CD4-positive, alpha-beta T cell (primary cell): ENCODE measurements at regions of chr15 and their contacts with region 1.

Region 1: GRCh38 chr15:64387562-64388168 is at the start of gene TRIP4:
- DNase-seq: peak; percentile 94 to 98 (median 96)
- ATAC-seq: peak; percentile 99
- H3K4me3 ChIP-seq: peak within 1 kb of the TSS; percentile 76
- H3K4me3 Mint-ChIP-seq: peak within 1 kb of the TSS; percentile 98
- H3K27ac ChIP-seq: peak within 1 kb of the TSS in 1 of 2 donors; percentile 8
- H3K27ac Mint-ChIP-seq: peak within 1 kb of the TSS; percentile 81
- H3K4me1 ChIP-seq: peaks cover 26% of the 10 kb centered on the region
- H3K4me1 Mint-ChIP-seq: peaks cover 18% of the 10 kb centered on the region
- H3K27me3 ChIP-seq: no peaks in the 10 kb centered on the region
- H3K27me3 Mint-ChIP-seq: no peaks in the 10 kb centered on the region
- CTCF ChIP-seq: no peak
- total RNA-seq, gene TRIP4: 9.6 to 10.7 TPM

Region 2: GRCh38 chr15:64333986-64334929 is 53.4 kb before region 1 on chr15:
- CTCF ChIA-PET with region 1: no interaction called
- POLR2A ChIA-PET with region 1: interaction called, 10 read pairs
- intact Hi-C with region 1: no loop called
- DNase-seq: peak in 13 of 14 experiments; percentile 28 to 72 (median 45)
- ATAC-seq: peak; percentile 96
- H3K4me3 ChIP-seq: no peak overlapping the region
- H3K4me3 Mint-ChIP-seq: peak overlapping the region; percentile 30
- H3K27ac ChIP-seq: peak overlapping the region in 1 of 2 donors; percentile 49
- H3K27ac Mint-ChIP-seq: peak overlapping the region; percentile 16
- H3K4me1 ChIP-seq: peaks cover 5% of the 10 kb centered on the region
- H3K4me1 Mint-ChIP-seq: peaks cover 36% of the 10 kb centered on the region
- H3K27me3 ChIP-seq: no peaks in the 10 kb centered on the region
- H3K27me3 Mint-ChIP-seq: no peaks in the 10 kb centered on the region
- CTCF ChIP-seq: peak; percentile 33

Region 3: GRCh38 chr15:64355944-64356709 is 31.5 kb before region 1 on chr15 and contains the start of gene CSNK1G1:
- CTCF ChIA-PET with region 1: interaction called, 3 read pairs
- POLR2A ChIA-PET with region 1: interaction called, 20 read pairs
- intact Hi-C with region 1: loop called (anchors 1 kb)
- DNase-seq: peak; percentile 80 to 97 (median 89)
- ATAC-seq: peak; percentile 96
- H3K4me3 ChIP-seq: peak within 1 kb of the TSS; percentile 95
- H3K4me3 Mint-ChIP-seq: peak within 1 kb of the TSS; percentile 96
- H3K27ac ChIP-seq: peak within 1 kb of the TSS; percentile 49 to 55
- H3K27ac Mint-ChIP-seq: peak within 1 kb of the TSS; percentile 87
- H3K4me1 ChIP-seq: peaks cover 16% of the 10 kb centered on the region
- H3K4me1 Mint-ChIP-seq: peaks cover 22% of the 10 kb centered on the region
- H3K27me3 ChIP-seq: no peaks in the 10 kb centered on the region
- H3K27me3 Mint-ChIP-seq: no peaks in the 10 kb centered on the region
- CTCF ChIP-seq: peak; percentile 34
- total RNA-seq, gene CSNK1G1: 12.2 to 13.7 TPM

Region 4: DNA sequence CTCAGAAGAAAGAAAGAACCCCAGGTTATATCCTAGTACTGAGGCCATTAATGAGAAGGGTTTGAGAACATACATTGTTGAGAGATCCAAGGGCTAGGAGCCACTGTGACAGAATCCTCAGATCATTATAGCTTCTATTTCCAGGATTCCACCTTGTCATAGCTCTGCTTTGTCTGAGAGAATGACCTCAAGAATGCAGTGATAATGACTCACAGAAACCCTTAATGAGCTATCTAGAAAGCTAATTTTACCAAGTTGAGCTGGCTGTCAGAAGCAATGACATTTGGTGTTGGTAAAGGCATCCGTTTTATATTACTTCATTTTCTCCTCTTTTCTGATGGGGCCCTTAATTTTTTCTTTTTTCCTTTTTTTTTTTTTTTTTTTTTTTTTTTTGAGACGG is 10.9 kb after region 1 on chr15:
- CTCF ChIA-PET with region 1: no interaction called
- POLR2A ChIA-PET with region 1: interaction called, 11 read pairs
- intact Hi-C with region 1: no loop called
- DNase-seq: no peak
- ATAC-seq: no peak
- H3K4me3 ChIP-seq: no peak overlapping the region
- H3K4me3 Mint-ChIP-seq: no peak overlapping the region
- H3K27ac ChIP-seq: no peak overlapping the region
- H3K27ac Mint-ChIP-seq: no peak overlapping the region
- H3K4me1 ChIP-seq: no peaks in the 10 kb centered on the region
- H3K4me1 Mint-ChIP-seq: peaks cover 4% of the 10 kb centered on the region
- H3K27me3 ChIP-seq: no peaks in the 10 kb centered on the region
- H3K27me3 Mint-ChIP-seq: no peaks in the 10 kb centered on the region
- CTCF ChIP-seq: no peak

Region 5: DNA sequence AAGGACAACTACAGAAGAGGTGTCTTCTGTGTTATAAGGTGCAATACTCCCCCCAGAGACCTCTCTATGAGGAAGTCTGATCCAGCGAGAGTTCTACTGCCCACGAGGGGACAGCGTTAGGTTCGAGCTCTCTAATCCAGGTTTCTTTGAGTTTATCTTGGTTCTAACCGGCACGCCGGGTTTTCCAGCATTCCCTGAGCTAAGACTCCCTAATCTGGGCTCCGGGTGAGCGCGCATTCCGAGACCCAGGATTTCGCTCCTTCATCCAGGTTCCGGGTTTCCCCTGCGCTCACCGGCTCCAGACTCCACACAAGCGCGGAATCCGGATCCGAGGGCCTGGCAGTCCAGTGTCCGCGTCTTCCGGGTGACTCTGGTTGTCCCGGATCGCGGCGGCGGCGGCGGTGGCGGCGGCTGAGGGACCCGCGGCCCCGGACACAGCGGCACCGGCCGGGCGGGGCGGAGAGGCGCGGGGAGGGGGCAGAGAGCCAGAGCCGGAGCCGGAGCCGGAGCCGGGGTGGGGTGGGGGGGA is 72.6 kb after region 1 on chr15 and contains the start of gene ZNF609:
- CTCF ChIA-PET with region 1: no interaction called
- POLR2A ChIA-PET with region 1: interaction called, 5 read pairs
- intact Hi-C with region 1: loop called in 1 of 2 experiments (anchors 10 kb)
- DNase-seq: peak; percentile 74 to 91 (median 86)
- ATAC-seq: peak; percentile 80
- H3K4me3 ChIP-seq: peak within 1 kb of the TSS; percentile 71
- H3K4me3 Mint-ChIP-seq: peak within 1 kb of the TSS; percentile 92
- H3K27ac ChIP-seq: peak within 1 kb of the TSS; percentile 52
- H3K27ac Mint-ChIP-seq: peak within 1 kb of the TSS; percentile 87
- H3K4me1 ChIP-seq: peaks cover 46% of the 10 kb centered on the region
- H3K4me1 Mint-ChIP-seq: peaks cover 88% of the 10 kb centered on the region
- H3K27me3 ChIP-seq: no peaks in the 10 kb centered on the region
- H3K27me3 Mint-ChIP-seq: no peaks in the 10 kb centered on the region
- CTCF ChIP-seq: no peak
- total RNA-seq, gene ZNF609: 62.4 to 65.3 TPM

Region 6: DNA sequence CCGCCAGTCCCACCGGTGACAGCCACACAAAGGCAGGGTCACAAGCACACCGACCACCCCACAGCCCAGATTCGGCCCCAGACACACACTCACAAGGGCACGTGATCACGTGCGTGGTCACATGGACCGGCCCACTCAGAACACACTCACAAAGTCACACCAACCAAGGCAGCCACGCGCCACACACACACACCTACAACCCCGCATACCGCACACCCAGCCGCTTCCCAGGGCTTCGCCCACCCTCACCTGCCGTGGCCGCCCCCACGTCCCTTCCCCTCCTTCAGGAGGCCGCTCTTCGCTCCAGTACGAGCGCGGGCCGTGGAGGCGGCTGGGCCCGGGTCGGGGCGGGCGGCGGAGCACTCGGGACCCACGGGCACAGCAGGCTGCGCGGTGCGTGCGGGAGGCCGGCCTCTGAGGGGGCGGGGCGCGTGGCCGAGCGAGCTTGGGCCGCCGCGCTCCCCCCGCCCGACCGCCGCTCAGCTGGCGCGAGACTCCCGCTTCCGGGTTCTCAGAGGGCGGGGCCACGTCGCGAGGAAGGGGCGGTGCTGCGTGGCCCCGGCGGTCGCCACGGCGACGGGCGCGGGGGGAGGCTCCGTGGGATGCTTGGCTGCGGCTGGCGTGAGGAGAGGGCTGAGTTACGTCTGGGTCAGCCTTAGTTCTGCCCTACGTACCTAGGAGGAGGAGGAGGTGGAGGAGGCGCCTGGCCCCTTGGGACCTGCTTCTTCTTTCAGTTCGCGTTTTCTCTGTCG is 601.9 kb after region 1 on chr15 and contains the start of gene SPG21:
- CTCF ChIA-PET with region 1: no interaction called
- POLR2A ChIA-PET with region 1: interaction called, 4 read pairs
- intact Hi-C with region 1: loop called in 1 of 2 experiments (anchors 5 kb)
- DNase-seq: peak; percentile 71 to 96 (median 87)
- ATAC-seq: peak; percentile 88
- H3K4me3 ChIP-seq: peak within 1 kb of the TSS; percentile 97
- H3K4me3 Mint-ChIP-seq: peak within 1 kb of the TSS; percentile 91
- H3K27ac ChIP-seq: peak within 1 kb of the TSS; percentile 63 to 66
- H3K27ac Mint-ChIP-seq: peak within 1 kb of the TSS; percentile 87
- H3K4me1 ChIP-seq: peaks cover 29% of the 10 kb centered on the region
- H3K4me1 Mint-ChIP-seq: peaks cover 53% of the 10 kb centered on the region
- H3K27me3 ChIP-seq: no peaks in the 10 kb centered on the region
- H3K27me3 Mint-ChIP-seq: no peaks in the 10 kb centered on the region
- CTCF ChIP-seq: no peak
- total RNA-seq, gene SPG21: 29.4 to 32.7 TPM

Region 7: DNA sequence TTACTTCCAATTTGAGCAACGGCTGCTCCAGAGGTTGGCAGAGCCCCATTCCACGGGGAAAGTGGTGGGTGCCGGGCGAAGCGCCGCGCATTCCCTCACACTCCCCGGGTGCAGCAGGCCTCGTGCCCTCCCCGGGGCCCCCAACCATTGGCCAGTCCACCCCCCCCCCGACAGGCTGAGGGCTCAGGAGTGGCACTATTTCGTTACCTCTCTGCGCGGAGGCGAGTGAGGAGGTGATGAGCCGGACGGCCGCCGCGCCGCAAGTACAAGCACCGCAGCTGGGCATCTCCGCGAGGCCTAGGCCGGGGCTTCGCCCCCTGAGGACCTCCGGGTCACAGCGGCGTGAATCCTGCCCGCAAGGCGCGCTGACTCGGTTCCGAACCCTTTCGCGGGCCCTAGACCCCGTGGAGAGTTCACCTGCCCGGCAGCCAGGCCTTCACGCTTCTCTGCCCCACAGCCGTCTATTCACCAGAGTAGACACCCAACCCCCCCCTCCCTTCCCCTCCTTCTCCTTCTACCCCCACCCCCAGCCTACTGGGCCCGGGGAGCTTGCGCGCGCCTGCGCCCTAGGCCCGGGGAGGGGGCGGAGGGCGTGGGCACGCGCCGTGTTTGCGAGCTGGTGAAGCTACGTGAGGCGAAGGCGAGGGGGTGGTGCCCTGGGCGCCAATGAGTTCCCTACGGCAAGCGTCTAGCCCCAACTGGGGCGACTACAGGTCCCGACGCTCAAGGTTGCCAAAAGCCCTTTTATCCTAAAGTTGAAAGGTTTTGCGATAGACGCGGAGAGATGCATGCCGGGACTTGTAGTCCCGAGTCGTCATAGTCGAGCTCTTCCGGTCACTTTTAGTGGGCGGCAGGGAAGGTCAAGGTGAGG is 797.4 kb after region 1 on chr15 and contains the start of gene CLPX:
- CTCF ChIA-PET with region 1: no interaction called
- POLR2A ChIA-PET with region 1: no interaction called
- intact Hi-C with region 1: loop called in 1 of 2 experiments (anchors 10 kb)
- DNase-seq: peak; percentile 84 to 99 (median 90)
- ATAC-seq: peak; percentile 97
- H3K4me3 ChIP-seq: peak within 1 kb of the TSS; percentile 91
- H3K4me3 Mint-ChIP-seq: peak within 1 kb of the TSS; percentile 94
- H3K27ac ChIP-seq: peak within 1 kb of the TSS; percentile 82 to 86
- H3K27ac Mint-ChIP-seq: peak within 1 kb of the TSS; percentile 85
- H3K4me1 ChIP-seq: peaks cover 29% of the 10 kb centered on the region
- H3K4me1 Mint-ChIP-seq: peaks cover 33% of the 10 kb centered on the region
- H3K27me3 ChIP-seq: no peaks in the 10 kb centered on the region
- H3K27me3 Mint-ChIP-seq: no peaks in the 10 kb centered on the region
- CTCF ChIP-seq: no peak
- total RNA-seq, gene CLPX: 29.1 to 36.3 TPM